MCF 10A (cell line): ENCODE measurements at regions of chr20 and their contacts with region 1.

Region 1: GRCh38 chr20:50992733-50993457 is 30.0 kb downstream of the KCNG1 start:
- DNase-seq: peak; percentile 77
- H3K4me3 Mint-ChIP-seq: no peak overlapping the region
- H3K27ac Mint-ChIP-seq: no peak overlapping the region
- H3K4me1 Mint-ChIP-seq: peaks cover 13% of the 10 kb centered on the region
- H3K27me3 Mint-ChIP-seq: no peaks in the 10 kb centered on the region
- CTCF ChIP-seq: peak; percentile 80

Region 2: GRCh38 chr20:50980851-50981713 is 11.8 kb before region 1 on chr20:
- CTCF ChIA-PET with region 1: interaction called, 56 read pairs
- POLR2A ChIA-PET with region 1: interaction called, 28 read pairs
- intact Hi-C with region 1: no loop called
- DNase-seq: peak; percentile 80
- H3K4me3 Mint-ChIP-seq: no peak overlapping the region
- H3K27ac Mint-ChIP-seq: peak overlapping the region; percentile 97
- H3K4me1 Mint-ChIP-seq: peaks cover 34% of the 10 kb centered on the region
- H3K27me3 Mint-ChIP-seq: no peaks in the 10 kb centered on the region
- CTCF ChIP-seq: peak; percentile 75

Region 3: GRCh38 chr20:51014797-51015722 is 22.2 kb after region 1 on chr20:
- CTCF ChIA-PET with region 1: interaction called, 26 read pairs
- POLR2A ChIA-PET with region 1: no interaction called
- intact Hi-C with region 1: no loop called
- DNase-seq: peak; percentile 63
- H3K4me3 Mint-ChIP-seq: no peak overlapping the region
- H3K27ac Mint-ChIP-seq: no peak overlapping the region
- H3K4me1 Mint-ChIP-seq: peaks cover 10% of the 10 kb centered on the region
- H3K27me3 Mint-ChIP-seq: no peaks in the 10 kb centered on the region
- CTCF ChIP-seq: peak; percentile 71

Region 4: DNA sequence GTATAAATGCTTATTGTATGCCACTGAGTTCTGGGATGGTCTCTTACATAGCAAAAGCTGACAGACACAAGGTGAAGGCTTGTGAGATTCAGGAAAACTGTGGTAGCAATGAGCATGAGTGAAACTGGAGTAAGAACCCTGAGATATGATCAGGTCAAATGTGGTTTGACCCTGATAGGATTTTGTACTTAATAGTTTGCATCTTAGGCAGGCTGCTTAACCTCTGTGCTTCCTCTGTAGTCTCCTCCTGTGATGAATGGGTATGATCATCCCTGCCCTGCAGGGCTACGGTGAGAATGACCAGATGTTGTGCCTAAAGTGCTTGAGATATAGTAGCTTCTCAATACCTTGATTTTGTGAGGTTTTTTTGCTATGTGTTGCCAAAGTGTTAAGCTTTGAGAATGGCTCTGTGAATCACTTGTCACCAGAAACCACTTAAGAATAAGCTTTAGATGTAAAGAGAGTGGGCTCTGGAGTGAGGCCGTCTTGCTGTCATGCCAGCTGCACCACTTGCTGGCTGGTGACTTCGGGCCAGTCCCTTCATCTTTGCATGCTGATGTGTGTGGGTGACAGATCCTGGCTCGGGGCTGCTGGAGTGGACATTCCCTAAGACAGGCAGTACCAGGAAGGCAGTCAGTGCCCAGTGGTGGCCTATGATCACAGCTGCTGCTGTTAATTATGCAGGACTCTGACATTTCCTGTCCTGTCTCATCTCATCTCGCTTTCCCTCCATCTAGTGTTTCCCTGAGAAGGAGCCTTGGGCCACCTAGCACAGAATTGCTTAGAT is 294.9 kb after region 1 on chr20:
- CTCF ChIA-PET with region 1: interaction called, 11 read pairs
- POLR2A ChIA-PET with region 1: no interaction called
- intact Hi-C with region 1: no loop called
- DNase-seq: no peak
- H3K4me3 Mint-ChIP-seq: no peak overlapping the region
- H3K27ac Mint-ChIP-seq: no peak overlapping the region
- H3K4me1 Mint-ChIP-seq: no peaks in the 10 kb centered on the region
- H3K27me3 Mint-ChIP-seq: no peaks in the 10 kb centered on the region
- CTCF ChIP-seq: no peak

Region 5: DNA sequence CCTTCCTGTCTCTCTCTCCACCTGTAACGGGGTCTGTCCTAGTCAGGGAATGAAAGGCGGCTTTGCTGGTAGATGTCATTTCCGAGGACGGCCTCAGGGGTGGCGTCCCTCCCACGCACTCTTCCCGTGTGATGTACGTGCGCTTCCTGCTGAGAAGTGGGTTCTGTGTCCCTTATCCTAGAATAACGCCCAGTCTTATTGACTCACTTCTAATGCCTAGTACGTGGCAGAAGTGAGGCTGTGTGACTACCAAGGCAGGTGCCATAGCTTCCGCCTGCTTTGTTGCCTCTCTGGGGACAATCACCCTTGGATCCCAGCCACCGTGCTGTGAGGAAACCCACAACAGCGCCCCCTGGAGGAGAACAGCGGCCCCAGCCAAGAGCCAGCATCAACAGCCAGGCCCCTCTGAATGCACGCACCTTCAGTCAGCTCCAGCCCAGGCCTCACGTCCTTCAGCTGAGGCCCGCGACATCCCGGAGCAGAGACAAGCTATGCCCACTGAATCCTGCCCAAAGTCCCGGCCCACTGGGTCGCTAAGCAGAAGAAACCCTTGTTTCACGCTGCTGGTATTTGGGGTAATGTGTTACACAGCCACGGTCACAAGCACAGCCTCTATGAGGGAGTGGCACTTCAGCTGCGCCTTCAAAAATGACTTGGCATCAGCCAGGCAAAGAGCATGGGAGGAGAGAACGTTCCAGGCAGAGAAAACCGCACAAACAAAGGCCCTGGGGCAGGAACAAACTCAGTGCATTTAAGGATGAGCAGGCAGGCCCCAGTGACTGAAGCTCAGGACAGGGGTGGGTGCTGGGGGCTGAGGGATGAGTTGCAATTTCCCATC is 325.4 kb after region 1 on chr20:
- CTCF ChIA-PET with region 1: interaction called, 362 read pairs
- POLR2A ChIA-PET with region 1: interaction called, 3 read pairs
- intact Hi-C with region 1: no loop called
- DNase-seq: peak; percentile 30
- H3K4me3 Mint-ChIP-seq: no peak overlapping the region
- H3K27ac Mint-ChIP-seq: no peak overlapping the region
- H3K4me1 Mint-ChIP-seq: peaks cover 5% of the 10 kb centered on the region
- H3K27me3 Mint-ChIP-seq: no peaks in the 10 kb centered on the region
- CTCF ChIP-seq: peak; percentile 43

Region 6: GRCh38 chr20:51326201-51326819 is 333.4 kb after region 1 on chr20:
- CTCF ChIA-PET with region 1: interaction called, 362 read pairs
- POLR2A ChIA-PET with region 1: interaction called, 7 read pairs
- intact Hi-C with region 1: no loop called
- DNase-seq: peak; percentile 70
- H3K4me3 Mint-ChIP-seq: no peak overlapping the region
- H3K27ac Mint-ChIP-seq: peak overlapping the region; percentile 8
- H3K4me1 Mint-ChIP-seq: peaks cover 12% of the 10 kb centered on the region
- H3K27me3 Mint-ChIP-seq: no peaks in the 10 kb centered on the region
- CTCF ChIP-seq: peak; percentile 41